Activated CD4-positive, alpha-beta memory T cell treated with anti-CD3 and anti-CD28 coated beads, Interleukin-2, amount 10 ng/mL, durations not matched to agents 7 days and 5 days (primary cell): ENCODE measurements at regions of chr15 and their contacts with region 1.

Region 1: DNA sequence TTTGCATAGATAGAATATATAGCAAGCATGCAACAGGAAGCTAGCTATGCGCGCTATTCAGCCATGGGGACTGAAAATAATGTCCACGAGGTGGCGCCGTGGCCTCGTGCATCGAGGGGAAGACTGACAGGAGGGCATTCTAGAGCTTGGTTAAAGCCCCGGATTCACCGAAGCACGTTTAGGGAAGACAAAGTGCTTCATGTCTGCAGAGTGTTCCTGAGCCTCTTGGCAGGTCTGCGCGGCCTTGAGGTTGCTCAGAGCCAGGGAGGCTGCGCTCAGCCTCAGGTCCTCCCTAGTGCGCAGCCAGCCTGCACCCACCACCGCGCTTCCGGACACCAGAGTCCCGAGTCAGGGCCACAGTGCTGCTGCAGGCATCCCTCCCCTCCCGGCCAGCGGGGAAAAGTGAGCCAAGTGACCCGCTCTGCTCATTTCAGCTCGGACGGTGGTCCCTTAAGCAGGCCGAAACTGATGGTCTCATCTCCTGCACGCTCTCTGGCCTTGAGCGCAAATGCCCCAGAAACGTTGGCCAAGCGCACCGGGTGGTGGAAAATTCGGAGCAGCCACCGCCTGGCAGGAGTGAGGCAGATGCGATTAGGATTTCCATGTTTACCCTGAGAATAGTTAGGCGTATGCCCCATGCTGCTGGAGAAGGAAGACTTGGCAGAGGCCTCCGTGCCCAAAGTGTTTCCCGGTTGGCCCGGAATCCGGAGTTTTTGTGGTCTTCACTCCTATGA is 24.8 kb downstream of the GABRA5 start:
- DNase-seq: peak; percentile 48
- H3K4me3 Mint-ChIP-seq: no peak overlapping the region
- H3K27ac Mint-ChIP-seq: no peak overlapping the region
- H3K4me1 Mint-ChIP-seq: no peaks in the 10 kb centered on the region
- H3K27me3 Mint-ChIP-seq: no peaks in the 10 kb centered on the region

Region 2: GRCh38 chr15:27017168-27017809 is 125.7 kb after region 1 on chr15:
- CTCF ChIA-PET with region 1: interaction called, 10 read pairs
- POLR2A ChIA-PET with region 1: no interaction called
- DNase-seq: peak; percentile 35
- H3K4me3 Mint-ChIP-seq: no peak overlapping the region
- H3K27ac Mint-ChIP-seq: no peak overlapping the region
- H3K4me1 Mint-ChIP-seq: no peaks in the 10 kb centered on the region
- H3K27me3 Mint-ChIP-seq: no peaks in the 10 kb centered on the region